Activated B cell treated with CpG ODN at 0.5 μM for 24 hours (primary cell): ENCODE measurements at regions of chr11 and their contacts with region 1.

Region 1: DNA sequence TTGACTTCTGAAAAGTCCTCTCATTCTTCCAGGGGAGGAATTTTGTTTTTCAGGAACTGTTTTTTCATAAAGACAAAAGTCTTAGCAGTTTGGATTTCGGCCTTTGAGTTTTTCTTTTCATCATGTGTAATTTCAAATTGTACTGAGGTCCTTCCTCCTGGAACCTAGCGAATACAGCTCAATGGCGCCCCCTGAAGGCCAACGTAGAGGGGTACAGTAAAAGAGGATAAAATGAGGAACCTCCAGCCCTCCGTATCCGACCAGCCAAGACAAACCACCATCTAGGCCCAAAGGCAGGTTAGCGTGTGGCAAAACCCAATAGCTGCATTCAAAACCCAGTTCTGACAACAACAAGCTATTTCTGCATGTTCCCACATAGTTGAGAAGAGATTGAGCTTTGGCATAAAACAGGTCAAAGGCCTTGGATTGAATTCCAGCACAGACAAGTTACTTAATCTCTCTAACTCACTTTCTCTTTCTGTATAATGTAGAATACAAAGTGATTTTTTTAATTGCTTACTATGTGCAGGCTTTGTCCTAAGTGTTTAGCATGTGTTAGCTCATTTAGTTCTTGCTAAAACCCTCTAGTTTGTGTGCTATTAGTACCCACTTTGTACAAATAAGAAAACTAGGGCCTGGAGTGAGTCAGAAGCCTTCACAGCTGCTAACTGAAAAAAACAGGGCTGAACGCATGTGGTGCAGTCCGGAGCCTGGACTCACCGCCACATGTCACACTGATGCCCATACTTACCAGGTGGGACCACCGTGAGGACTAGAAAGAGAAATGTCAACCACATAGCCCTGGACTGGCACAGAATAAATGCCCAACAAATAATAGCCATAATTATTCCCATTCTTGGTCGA is 43.2 kb upstream of the ETS1 start:
- DNase-seq: peak; percentile 86
- ATAC-seq: peak; percentile 85
- H3K4me3 Mint-ChIP-seq: peak overlapping the region; percentile 50
- H3K27ac Mint-ChIP-seq: peak overlapping the region; percentile 92
- H3K4me1 Mint-ChIP-seq: peaks cover 68% of the 10 kb centered on the region
- H3K27me3 Mint-ChIP-seq: no peaks in the 10 kb centered on the region
- CTCF ChIP-seq: no peak

Region 2: DNA sequence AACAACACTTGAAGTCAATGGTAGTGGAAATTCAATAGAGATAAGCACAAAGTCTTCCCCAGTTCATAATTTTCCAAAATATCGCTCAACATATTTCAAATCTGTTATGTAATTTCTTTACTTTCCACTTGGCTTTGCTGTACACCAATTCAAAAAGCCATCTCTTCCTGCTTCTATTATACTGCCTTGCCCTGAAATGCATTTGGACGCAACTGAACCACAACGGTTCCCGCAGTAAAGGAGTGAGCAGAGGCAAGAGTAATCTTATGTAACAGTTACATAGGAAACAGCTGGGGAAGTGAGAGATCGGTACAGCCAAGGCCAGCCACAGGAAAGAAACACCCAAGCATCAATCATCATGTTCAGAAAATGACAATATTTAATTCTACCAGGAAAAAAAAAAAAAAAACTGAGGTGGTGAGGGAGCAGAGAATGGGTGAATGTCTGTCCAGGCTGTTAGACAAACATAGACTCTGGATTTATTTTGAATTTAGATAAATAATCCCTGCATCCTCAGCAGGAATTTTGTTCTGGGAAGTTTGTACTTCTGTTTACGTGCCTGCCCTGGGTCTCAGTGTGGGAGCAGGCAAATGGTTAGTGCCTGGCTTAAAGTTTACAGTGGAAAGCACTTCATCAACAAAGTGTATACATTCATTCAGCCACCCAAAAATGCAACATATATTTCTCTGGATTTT is 435.4 kb before region 1 on chr11:
- CTCF ChIA-PET with region 1: interaction called, 11 read pairs
- POLR2A ChIA-PET with region 1: no interaction called
- intact Hi-C with region 1: loop called (anchors 1 kb)
- DNase-seq: no peak
- ATAC-seq: peak; percentile 84
- H3K4me3 Mint-ChIP-seq: peak overlapping the region; percentile 16
- H3K27ac Mint-ChIP-seq: peak overlapping the region; percentile 22
- H3K4me1 Mint-ChIP-seq: peaks cover 18% of the 10 kb centered on the region
- H3K27me3 Mint-ChIP-seq: no peaks in the 10 kb centered on the region
- CTCF ChIP-seq: no peak

Region 3: GRCh38 chr11:128482512-128483191 is 147.9 kb before region 1 on chr11:
- CTCF ChIA-PET with region 1: interaction called, 27 read pairs
- POLR2A ChIA-PET with region 1: interaction called, 5 read pairs
- intact Hi-C with region 1: loop called (anchors 1 kb)
- DNase-seq: no peak
- ATAC-seq: peak; percentile 18
- H3K4me3 Mint-ChIP-seq: peak overlapping the region; percentile 67
- H3K27ac Mint-ChIP-seq: peak overlapping the region; percentile 89
- H3K4me1 Mint-ChIP-seq: peaks cover 95% of the 10 kb centered on the region
- H3K27me3 Mint-ChIP-seq: no peaks in the 10 kb centered on the region
- CTCF ChIP-seq: no peak

Region 4: DNA sequence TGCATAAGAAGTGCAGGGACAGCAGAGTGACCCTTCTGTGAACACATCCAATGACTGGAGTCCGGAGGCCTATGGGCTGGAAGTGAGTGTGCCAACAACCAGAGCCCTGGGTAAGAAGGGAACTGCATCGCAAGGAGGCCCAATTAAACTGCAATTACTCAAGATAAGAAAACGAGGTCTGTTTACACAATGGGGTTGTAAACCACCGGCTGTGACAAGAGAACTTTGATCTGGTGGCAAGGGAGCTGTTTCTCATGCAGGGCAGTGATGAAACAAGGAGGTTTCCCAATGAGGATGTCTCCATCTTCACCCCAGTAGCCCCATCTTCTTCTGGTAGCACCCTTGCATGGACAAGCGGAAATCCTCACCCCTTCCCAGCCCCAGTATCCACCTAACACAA is 64.7 kb before region 1 on chr11:
- CTCF ChIA-PET with region 1: interaction called, 4 read pairs
- POLR2A ChIA-PET with region 1: interaction called, 48 read pairs
- intact Hi-C with region 1: no loop called
- DNase-seq: no peak
- ATAC-seq: no peak
- H3K4me3 Mint-ChIP-seq: no peak overlapping the region
- H3K27ac Mint-ChIP-seq: peak overlapping the region; percentile 68
- H3K4me1 Mint-ChIP-seq: peaks cover 76% of the 10 kb centered on the region
- H3K27me3 Mint-ChIP-seq: no peaks in the 10 kb centered on the region
- CTCF ChIP-seq: no peak

Region 5: GRCh38 chr11:128643661-128644317 is 13.2 kb after region 1 on chr11:
- CTCF ChIA-PET with region 1: no interaction called
- POLR2A ChIA-PET with region 1: no interaction called
- intact Hi-C with region 1: no loop called
- DNase-seq: no peak
- ATAC-seq: no peak
- H3K4me3 Mint-ChIP-seq: no peak overlapping the region
- H3K27ac Mint-ChIP-seq: no peak overlapping the region
- H3K4me1 Mint-ChIP-seq: peaks cover 19% of the 10 kb centered on the region
- H3K27me3 Mint-ChIP-seq: no peaks in the 10 kb centered on the region
- CTCF ChIP-seq: no peak

Region 6: GRCh38 chr11:128725630-128726319 is 95.2 kb after region 1 on chr11:
- CTCF ChIA-PET with region 1: interaction called, 11 read pairs
- POLR2A ChIA-PET with region 1: interaction called, 3 read pairs
- intact Hi-C with region 1: no loop called
- DNase-seq: peak; percentile 42
- ATAC-seq: peak; percentile 64
- H3K4me3 Mint-ChIP-seq: peak overlapping the region; percentile 83
- H3K27ac Mint-ChIP-seq: peak overlapping the region; percentile 98
- H3K4me1 Mint-ChIP-seq: peaks cover 98% of the 10 kb centered on the region
- H3K27me3 Mint-ChIP-seq: no peaks in the 10 kb centered on the region
- CTCF ChIP-seq: no peak

Region 7: GRCh38 chr11:128859563-128860441 is 229.2 kb after region 1 on chr11:
- CTCF ChIA-PET with region 1: interaction called, 6 read pairs
- POLR2A ChIA-PET with region 1: no interaction called
- intact Hi-C with region 1: loop called (anchors 1 kb)
- DNase-seq: peak; percentile 77
- ATAC-seq: peak; percentile 98
- H3K4me3 Mint-ChIP-seq: no peak overlapping the region
- H3K27ac Mint-ChIP-seq: no peak overlapping the region
- H3K4me1 Mint-ChIP-seq: peaks cover 16% of the 10 kb centered on the region
- H3K27me3 Mint-ChIP-seq: no peaks in the 10 kb centered on the region
- CTCF ChIP-seq: peak; percentile 54